ENCODE measurements at regions of chr7 and their contacts with region 1.

Region 1: DNA sequence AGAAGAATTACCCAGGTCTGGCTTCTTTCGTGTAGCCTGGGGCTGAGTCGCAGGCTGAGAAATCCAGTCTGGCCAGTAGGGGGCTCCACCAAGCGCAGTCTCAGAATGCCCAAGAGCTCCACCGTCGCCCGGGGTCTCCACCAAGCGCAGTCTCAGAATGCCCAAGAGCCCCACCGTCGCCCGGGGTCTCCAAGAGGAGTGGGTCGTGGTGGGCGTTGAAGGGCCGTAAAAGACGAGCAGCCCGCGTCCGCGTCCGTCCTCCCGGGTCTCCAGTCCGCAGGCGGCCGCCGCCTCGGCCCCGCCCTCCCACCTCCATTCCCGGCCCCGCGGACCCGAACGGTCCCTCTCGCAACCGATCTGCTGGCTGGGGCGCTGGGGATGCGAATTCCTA is 895 bp upstream of the ZYX start:
- DNase-seq: peak; percentile 86 to 91 (median 89)
- ATAC-seq: peak; percentile 62 to 71 (median 66)
- H3K4me3 ChIP-seq: peak overlapping the region; percentile 62 to 96 (median 86)
- H3K27ac ChIP-seq: peak overlapping the region; percentile 97 to 100 (median 99)
- H3K4me1 ChIP-seq: peaks cover 5 to 79% (median 43%) of the 10 kb centered on the region in 12 donors
- H3K27me3 ChIP-seq: no peaks in the 10 kb centered on the region
- CTCF ChIP-seq: peak; percentile 83 to 97 (median 90)
- POLR2A ChIP-seq: no peak

Region 2: GRCh38 chr7:143287935-143288826 is 92.1 kb before region 1 on chr7 and contains the start of gene CASP2:
- intact Hi-C with region 1: loop called in 4 of 10 experiments (anchors 5 to 10 kb)
- DNase-seq: peak; percentile 99
- ATAC-seq: peak; percentile 96 to 98 (median 97)
- H3K4me3 ChIP-seq: peak within 1 kb of the TSS; percentile 60 to 99 (median 86)
- H3K27ac ChIP-seq: peak within 1 kb of the TSS; percentile 76 to 97 (median 93)
- H3K4me1 ChIP-seq: peaks cover 0 to 60% (median 41%) of the 10 kb centered on the region in 12 donors
- H3K27me3 ChIP-seq: no peaks in the 10 kb centered on the region
- CTCF ChIP-seq: peak in 11 of 12 donors; percentile 13 to 66 (median 46)
- POLR2A ChIP-seq: peak in 1 of 2 donors; percentile 70
- total RNA-seq, gene CASP2: 7.4 to 18.3 (median 13.8) TPM

Region 3: GRCh38 chr7:143305423-143306070 is 74.7 kb before region 1 on chr7:
- intact Hi-C with region 1: loop called in 1 of 10 experiments (anchors 5 kb)
- DNase-seq: peak; percentile 64 to 83 (median 70)
- ATAC-seq: peak in 3 of 4 donors; percentile 86 to 93 (median 89)
- H3K4me3 ChIP-seq: no peak overlapping the region
- H3K27ac ChIP-seq: no peak overlapping the region
- H3K4me1 ChIP-seq: peaks cover 0 to 31% (median 0%) of the 10 kb centered on the region in 12 donors
- H3K27me3 ChIP-seq: no peaks in the 10 kb centered on the region
- CTCF ChIP-seq: peak; percentile 71 to 87 (median 80)
- POLR2A ChIP-seq: no peak

Region 4: GRCh38 chr7:143321734-143322133 is 58.5 kb before region 1 on chr7:
- intact Hi-C with region 1: loop called in 1 of 10 experiments (anchors 5 kb)
- DNase-seq: peak in 2 of 5 donors; percentile 24 to 41
- ATAC-seq: peak in 3 of 4 donors; percentile 32 to 53 (median 45)
- H3K4me3 ChIP-seq: no peak overlapping the region
- H3K27ac ChIP-seq: peak overlapping the region in 1 of 12 donors; percentile 27
- H3K4me1 ChIP-seq: peaks cover 0 to 17% (median 0%) of the 10 kb centered on the region in 12 donors
- H3K27me3 ChIP-seq: no peaks in the 10 kb centered on the region
- CTCF ChIP-seq: peak in 1 of 12 donors; percentile 18
- POLR2A ChIP-seq: no peak

Region 5: DNA sequence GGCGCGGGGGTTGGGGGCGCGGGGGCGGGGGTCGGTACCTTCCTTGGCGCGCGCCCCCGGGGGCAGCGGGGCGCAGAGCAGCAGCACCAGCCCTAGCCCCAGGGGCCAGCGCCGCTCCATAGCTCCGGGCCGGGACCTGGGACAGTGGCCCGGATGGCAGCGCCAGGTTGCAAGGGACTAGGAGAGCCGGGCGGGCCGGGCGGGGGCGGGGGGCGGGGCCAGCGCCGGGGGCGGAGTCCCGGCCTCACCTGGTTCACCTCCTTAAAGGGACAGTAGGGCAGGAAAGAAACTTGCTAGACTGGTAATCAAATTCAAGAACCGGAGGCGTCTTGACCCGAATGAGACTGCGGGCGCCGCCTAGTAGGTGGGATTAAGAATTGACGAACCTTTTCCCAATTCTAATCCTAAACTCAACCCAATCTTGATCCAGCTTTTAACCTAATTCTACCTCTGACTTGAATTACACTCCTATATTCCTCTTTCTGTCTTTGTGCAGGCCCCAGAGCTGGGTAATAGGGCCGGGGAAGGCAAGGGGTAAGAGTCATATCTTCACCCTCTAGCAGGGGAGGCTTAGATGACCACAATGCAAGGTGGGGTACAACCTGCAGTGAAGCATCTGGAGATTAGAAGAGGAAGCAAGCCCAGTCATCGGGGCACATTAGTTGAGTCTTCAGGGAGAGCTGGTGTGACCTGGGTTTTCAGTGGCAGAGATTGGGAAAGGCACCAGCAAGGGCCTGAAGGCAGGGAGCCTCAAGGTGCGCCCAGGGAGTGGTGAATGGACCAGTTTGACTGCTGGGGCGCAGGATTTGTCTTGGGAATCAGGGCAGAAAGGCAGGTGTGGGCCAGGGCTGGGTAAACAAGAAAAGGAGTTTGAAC is 28.7 kb after region 1 on chr7 and contains the start of gene EPHA1:
- intact Hi-C with region 1: loop called in 1 of 10 experiments (anchors 2 kb)
- DNase-seq: peak in 1 of 5 donors; percentile 24
- ATAC-seq: no peak
- H3K4me3 ChIP-seq: peak within 1 kb of the TSS in 9 of 12 donors; percentile 18 to 53 (median 25)
- H3K27ac ChIP-seq: no peak within 1 kb of the TSS
- H3K4me1 ChIP-seq: peaks cover 0 to 63% (median 17%) of the 10 kb centered on the region in 12 donors
- H3K27me3 ChIP-seq: peaks cover 0 to 23% (median 0%) of the 10 kb centered on the region in 9 donors
- CTCF ChIP-seq: peak in 11 of 12 donors; percentile 11 to 46 (median 24)
- POLR2A ChIP-seq: no peak
- total RNA-seq, gene EPHA1: 0.06 to 0.51 (median 0.48) TPM in 3 of 9 donors, not detected in the others

Region 6: DNA sequence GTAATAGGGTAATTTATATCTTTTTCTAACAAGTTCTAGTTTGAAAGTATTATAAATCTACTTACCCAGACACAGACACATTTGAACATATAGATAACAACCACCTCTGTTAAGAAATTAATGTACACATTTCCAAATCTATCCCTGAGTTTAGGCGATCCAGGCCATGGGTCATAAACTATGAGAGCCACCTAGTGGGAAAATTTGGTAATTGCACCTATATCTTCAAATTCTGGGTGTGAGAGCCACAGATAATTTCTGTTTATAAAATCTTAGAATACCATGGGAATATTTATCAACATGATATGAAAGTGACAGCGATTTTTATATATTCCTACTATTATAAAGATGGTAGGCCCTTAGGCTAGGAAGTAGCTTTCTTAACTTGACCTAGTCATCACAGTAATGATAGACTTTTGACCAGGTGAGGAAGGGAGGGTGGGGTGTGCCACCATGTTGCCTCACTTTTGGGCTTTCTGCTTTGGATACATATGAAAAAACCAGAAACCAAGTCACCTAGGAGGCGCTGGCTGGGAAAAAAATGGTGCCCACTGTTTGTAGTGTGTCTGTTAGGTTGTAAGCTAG is 36.4 kb after region 1 on chr7:
- intact Hi-C with region 1: loop called in 9 of 10 experiments (anchors 1 to 5 kb)
- DNase-seq: no peak
- ATAC-seq: peak in 1 of 4 donors; percentile 52
- H3K4me3 ChIP-seq: no peak overlapping the region
- H3K27ac ChIP-seq: no peak overlapping the region
- H3K4me1 ChIP-seq: peaks cover 0 to 24% (median 0%) of the 10 kb centered on the region in 12 donors
- H3K27me3 ChIP-seq: peaks cover 0 to 36% (median 0%) of the 10 kb centered on the region in 9 donors
- CTCF ChIP-seq: peak; percentile 73 to 90 (median 84)
- POLR2A ChIP-seq: no peak

Region 7: GRCh38 chr7:143901668-143902331 is 521.5 kb after region 1 on chr7 and contains the start of gene TCAF1:
- intact Hi-C with region 1: loop called in 1 of 10 experiments (anchors 10 kb)
- DNase-seq: peak; percentile 97 to 98 (median 97)
- ATAC-seq: peak; percentile 97 to 99 (median 99)
- H3K4me3 ChIP-seq: peak within 1 kb of the TSS; percentile 62 to 99 (median 89)
- H3K27ac ChIP-seq: peak within 1 kb of the TSS; percentile 86 to 98 (median 96)
- H3K4me1 ChIP-seq: peaks cover 0 to 41% (median 22%) of the 10 kb centered on the region in 12 donors
- H3K27me3 ChIP-seq: no peaks in the 10 kb centered on the region
- CTCF ChIP-seq: peak in 8 of 12 donors; percentile 17 to 50 (median 36)
- POLR2A ChIP-seq: peak in 1 of 2 donors; percentile 81
- total RNA-seq, gene TCAF1: 31.4 to 71.1 (median 58.0) TPM

Measured in heart left ventricle (tissue), 16 donors.